AG04449 (cell line): ENCODE measurements at regions of chr4 and their contacts with region 1.

Region 1: DNA sequence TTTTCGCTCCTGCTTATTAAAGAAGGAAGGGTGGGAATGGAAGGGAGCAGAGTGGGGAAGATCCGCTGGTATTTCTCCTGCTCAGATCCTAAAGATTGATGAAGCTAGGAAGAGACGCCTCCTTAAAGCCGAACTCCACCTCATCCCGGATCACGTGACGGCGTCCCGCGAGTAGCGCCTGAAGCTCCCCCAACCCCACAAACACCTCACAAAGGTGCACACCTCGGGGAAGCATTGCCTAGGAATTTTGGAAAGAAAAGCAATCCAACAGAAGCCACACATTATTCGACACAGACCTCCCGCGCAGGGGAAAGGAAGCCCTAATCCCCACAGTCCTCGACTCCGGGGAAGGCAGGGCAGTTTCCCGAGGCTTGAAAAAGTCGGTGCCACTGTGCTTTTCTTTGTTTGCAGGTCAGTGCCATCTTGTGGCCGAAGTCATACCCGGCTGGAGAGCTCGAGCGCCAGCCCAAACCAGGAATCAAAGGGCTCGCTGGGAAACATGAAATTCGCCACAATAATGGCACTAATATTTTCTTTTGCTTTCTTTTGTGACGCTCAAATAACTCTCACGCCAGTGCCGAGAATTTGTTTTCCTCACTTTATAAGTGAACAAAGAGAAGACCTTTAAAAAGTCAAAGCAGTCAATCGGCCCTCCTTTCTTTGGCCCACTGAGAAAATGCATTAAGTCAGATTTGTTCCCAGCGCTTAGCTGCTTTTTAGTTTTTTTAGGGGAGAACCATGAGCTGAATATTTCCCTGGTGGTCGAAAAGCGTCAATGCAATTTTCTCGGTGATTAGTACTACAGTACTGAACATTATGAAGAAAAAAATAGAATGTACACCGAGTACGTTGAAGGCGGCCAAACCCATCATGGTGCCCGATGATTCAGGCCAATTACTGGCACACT is at the start of gene NPY1R:
- DNase-seq: peak; percentile 17
- H3K4me3 ChIP-seq: peak within 1 kb of the TSS; percentile 64
- CTCF ChIP-seq: peak; percentile 80

Region 2: DNA sequence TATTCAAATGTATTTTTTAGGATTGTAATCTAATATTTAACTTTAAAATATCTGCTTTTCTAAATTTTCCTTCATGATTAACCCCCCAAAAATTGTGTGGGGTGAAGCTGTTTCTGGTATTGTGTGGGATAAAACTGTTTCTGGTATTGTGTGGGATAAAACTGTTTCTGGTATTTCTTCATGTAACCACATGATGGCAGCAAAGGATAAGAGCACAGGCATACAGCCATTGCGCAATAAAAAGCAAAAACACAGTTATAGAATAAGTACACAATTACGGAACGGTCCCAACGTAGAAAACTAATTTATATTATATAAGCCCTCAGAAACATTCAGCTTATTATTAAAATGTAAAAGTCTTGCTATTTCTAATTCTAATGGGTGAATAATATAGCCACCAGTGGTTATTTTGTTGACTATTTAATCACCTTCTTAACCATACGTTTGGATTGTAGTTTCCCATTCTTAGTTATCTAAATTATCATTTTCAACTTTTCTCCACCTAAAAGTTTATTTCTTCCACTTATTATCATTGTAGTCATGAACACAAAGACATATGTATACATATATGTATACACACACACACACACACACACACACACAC is 835.1 kb before region 1 on chr4:
- CTCF ChIA-PET with region 1: interaction called, 27 read pairs
- POLR2A ChIA-PET with region 1: no interaction called
- DNase-seq: no peak
- H3K4me3 ChIP-seq: no peak overlapping the region
- CTCF ChIP-seq: peak; percentile 56

Region 3: DNA sequence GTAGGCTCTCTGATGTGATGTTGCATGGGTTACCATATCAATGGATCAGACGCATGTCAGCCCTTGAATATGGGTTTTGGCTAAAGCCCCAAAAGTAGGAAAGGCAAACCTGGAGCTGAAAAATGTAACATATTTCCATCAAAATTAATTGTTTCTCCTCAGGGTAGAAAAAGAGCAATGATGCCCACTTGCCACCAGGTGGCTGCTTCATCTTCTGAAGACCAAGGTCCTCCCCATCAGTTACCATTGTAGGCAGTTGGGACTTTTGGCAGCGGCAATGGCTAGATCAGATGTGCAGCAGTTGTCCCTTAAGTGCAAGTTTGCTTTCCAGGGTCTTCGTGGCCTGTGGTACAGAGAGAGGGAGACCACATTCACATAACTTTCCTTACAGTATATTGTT is 284.3 kb before region 1 on chr4:
- CTCF ChIA-PET with region 1: interaction called, 25 read pairs
- POLR2A ChIA-PET with region 1: no interaction called
- DNase-seq: no peak
- H3K4me3 ChIP-seq: no peak overlapping the region
- CTCF ChIP-seq: peak; percentile 43

Region 4: GRCh38 chr4:163107754-163108153 is 225.0 kb before region 1 on chr4:
- CTCF ChIA-PET with region 1: interaction called, 101 read pairs
- POLR2A ChIA-PET with region 1: no interaction called
- DNase-seq: no peak
- H3K4me3 ChIP-seq: no peak overlapping the region
- CTCF ChIP-seq: no peak

Region 5: GRCh38 chr4:163217505-163217904 is 115.2 kb before region 1 on chr4:
- CTCF ChIA-PET with region 1: no interaction called
- POLR2A ChIA-PET with region 1: no interaction called
- DNase-seq: no peak
- H3K4me3 ChIP-seq: no peak overlapping the region
- CTCF ChIP-seq: no peak

Region 6: GRCh38 chr4:163344147-163345125 is 11.7 kb after region 1 on chr4:
- CTCF ChIA-PET with region 1: interaction called, 10 read pairs
- POLR2A ChIA-PET with region 1: interaction called, 3 read pairs
- DNase-seq: no peak
- H3K4me3 ChIP-seq: no peak overlapping the region
- CTCF ChIP-seq: no peak

Region 7: DNA sequence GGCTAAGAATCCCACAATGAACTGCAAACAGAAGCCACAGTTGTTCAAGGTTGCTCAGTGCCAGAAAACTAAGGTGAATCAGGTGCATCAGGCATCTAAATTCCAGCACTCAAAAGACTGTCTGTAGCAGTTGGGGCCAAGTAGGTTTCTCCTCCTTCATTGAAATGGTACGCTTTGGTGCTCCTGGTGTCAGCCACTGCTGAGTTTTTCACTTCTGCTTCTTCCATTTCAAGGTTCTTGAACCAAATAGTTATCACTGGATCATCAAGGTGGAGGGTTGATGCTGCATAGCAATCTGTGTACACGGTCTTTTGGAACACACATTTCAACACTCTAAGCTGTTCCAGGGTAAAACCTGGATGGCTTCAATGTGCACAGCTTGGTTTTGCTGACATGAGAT is 236.1 kb after region 1 on chr4:
- CTCF ChIA-PET with region 1: no interaction called
- POLR2A ChIA-PET with region 1: no interaction called
- DNase-seq: no peak
- H3K4me3 ChIP-seq: no peak overlapping the region
- CTCF ChIP-seq: no peak

Region 8: GRCh38 chr4:163768014-163768413 is 435.3 kb after region 1 on chr4:
- CTCF ChIA-PET with region 1: no interaction called
- POLR2A ChIA-PET with region 1: no interaction called
- DNase-seq: no peak
- H3K4me3 ChIP-seq: no peak overlapping the region
- CTCF ChIP-seq: no peak